Activated CD8-positive, alpha-beta T cell treated with anti-CD3 and anti-CD28 coated beads for 36 hours (primary cell): ENCODE measurements at regions of chr6 and their contacts with region 1.

Region 1: DNA sequence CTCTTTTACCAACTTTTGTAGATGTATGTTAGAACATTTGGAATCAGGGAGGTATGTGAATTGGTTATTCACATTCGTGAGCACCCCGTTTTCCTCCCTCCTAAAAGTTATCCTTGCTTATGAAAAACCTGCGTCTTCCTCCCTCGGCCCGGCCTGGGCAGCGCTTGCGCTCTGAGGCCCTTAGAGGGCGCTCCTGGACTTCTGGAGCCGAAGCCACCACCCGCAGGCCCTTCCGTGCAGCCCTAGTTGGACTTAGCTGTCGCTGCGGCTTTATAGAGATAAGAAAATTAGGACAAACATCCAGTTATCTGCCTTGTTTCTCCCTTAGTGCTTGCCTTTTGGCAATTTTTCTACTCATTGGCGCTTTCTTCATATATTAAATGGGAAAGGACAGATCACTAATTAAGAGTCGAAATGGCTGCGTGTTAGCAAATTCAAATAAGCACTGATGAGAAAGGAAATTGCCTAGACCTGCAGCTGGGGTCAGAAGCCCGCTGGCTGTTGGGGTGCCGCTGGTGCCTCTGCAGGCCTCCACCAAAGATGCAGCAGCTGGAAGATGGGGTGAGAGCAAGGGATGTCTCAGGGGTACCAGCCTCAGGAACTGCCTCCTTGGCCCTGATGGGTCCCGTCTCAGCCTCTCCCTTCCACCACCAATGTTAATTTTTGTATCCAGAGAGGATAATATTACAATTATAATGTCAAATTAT is 5.2 kb downstream of the FNDC1 start:
- DNase-seq: peak; percentile 81
- ATAC-seq: peak; percentile 89
- H3K4me3 Mint-ChIP-seq: no peak overlapping the region
- H3K27ac Mint-ChIP-seq: no peak overlapping the region
- H3K4me1 Mint-ChIP-seq: peaks cover 4% of the 10 kb centered on the region
- H3K27me3 Mint-ChIP-seq: peaks cover 43% of the 10 kb centered on the region
- CTCF ChIP-seq: peak; percentile 93

Region 2: DNA sequence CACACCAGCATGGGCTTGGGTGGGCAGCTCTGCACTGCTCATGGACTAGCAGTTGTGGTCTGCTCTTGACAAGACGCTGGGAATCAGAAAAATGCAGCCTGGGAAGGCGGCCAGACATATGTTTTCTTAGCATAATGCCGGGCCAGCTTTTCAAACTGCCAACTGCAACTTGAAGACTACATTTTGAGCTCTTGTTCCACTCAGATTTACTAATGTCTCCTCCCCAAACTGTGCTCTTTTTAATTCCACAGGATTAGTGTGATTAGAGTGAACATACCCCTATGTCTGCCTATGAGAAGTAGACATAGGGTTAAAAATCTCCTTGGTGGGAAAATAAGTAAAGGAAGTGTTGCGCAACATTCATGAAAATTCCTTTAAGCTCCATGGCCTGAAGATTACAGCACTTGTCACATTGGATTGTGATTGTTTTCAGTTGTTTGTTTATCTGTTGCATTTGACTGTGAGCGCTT is 10.5 kb before region 1 on chr6:
- CTCF ChIA-PET with region 1: interaction called, 12 read pairs
- POLR2A ChIA-PET with region 1: no interaction called
- intact Hi-C with region 1: no loop called
- DNase-seq: no peak
- ATAC-seq: no peak
- H3K4me3 Mint-ChIP-seq: no peak overlapping the region
- H3K27ac Mint-ChIP-seq: no peak overlapping the region
- H3K4me1 Mint-ChIP-seq: peaks cover 4% of the 10 kb centered on the region
- H3K27me3 Mint-ChIP-seq: peaks cover 48% of the 10 kb centered on the region
- CTCF ChIP-seq: no peak

Region 3: GRCh38 chr6:159184559-159184958 is 10.1 kb after region 1 on chr6:
- CTCF ChIA-PET with region 1: interaction called, 56 read pairs
- POLR2A ChIA-PET with region 1: no interaction called
- intact Hi-C with region 1: no loop called
- DNase-seq: no peak
- ATAC-seq: no peak
- H3K4me3 Mint-ChIP-seq: no peak overlapping the region
- H3K27ac Mint-ChIP-seq: no peak overlapping the region
- H3K4me1 Mint-ChIP-seq: peaks cover 6% of the 10 kb centered on the region
- H3K27me3 Mint-ChIP-seq: peaks cover 10% of the 10 kb centered on the region
- CTCF ChIP-seq: no peak

Region 4: DNA sequence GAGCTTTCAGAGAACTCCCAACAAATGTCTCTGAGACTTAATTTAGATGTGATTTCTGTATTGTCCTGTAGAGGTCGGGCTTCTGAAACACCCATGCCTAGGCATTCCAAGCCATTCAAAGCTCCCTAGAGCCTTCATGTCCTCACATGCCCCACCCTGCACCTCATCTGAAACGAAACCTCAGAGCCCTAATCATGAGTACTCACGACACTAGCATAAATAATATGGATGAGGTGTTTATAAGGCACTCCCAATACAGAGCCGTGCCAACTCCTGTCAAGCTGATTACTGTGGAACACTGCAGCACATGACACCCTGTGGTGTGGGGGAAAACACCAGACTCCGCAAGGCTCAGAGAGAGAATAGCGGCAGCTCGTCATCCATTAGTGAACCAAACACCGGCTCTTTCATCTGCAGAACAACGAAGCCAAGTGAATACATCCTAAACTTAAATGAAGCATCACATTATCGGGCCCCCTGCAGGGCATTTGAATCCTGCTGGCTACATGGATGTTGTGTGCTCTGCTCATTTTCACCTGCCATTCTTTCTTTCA is 78.6 kb after region 1 on chr6:
- CTCF ChIA-PET with region 1: interaction called, 13 read pairs
- POLR2A ChIA-PET with region 1: no interaction called
- intact Hi-C with region 1: no loop called
- DNase-seq: peak; percentile 3
- ATAC-seq: peak; percentile 72
- H3K4me3 Mint-ChIP-seq: no peak overlapping the region
- H3K27ac Mint-ChIP-seq: no peak overlapping the region
- H3K4me1 Mint-ChIP-seq: peaks cover 1% of the 10 kb centered on the region
- H3K27me3 Mint-ChIP-seq: peaks cover 9% of the 10 kb centered on the region
- CTCF ChIP-seq: peak; percentile 68

Region 5: DNA sequence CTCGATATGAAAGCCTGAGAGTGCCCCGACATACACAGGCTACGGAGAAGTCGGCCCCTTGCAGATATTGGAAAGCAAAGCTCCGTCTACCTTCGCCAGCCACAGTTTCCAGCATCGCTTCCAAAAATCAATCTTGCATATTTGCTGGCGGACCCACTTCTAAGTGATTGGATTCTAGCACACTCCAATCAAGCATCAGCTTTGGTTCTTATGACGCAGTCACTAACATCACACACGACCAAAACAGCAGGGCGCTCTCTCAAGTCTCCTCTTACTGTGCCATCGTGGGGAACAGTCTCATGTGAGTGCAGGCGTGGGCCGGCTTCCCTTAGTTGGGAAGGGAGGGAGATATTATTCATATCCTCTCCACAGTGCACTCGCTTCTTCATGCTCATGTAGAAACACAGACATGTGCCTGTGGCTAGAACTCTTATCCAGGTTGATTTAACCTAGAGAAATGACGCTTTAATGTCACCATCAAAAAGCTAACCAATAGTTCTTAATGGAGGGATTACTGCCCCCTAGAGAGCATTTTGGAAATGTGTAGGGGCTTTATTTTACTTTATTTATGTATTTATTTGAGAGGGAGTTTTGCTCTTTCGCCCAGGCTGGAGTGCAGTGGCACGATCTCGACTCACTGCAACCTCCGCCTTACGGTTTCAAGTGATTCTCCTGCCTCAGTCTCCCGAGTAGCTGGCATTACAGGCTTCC is 288.9 kb after region 1 on chr6:
- CTCF ChIA-PET with region 1: interaction called, 15 read pairs
- POLR2A ChIA-PET with region 1: no interaction called
- intact Hi-C with region 1: no loop called
- DNase-seq: no peak
- ATAC-seq: no peak
- H3K4me3 Mint-ChIP-seq: no peak overlapping the region
- H3K27ac Mint-ChIP-seq: no peak overlapping the region
- H3K4me1 Mint-ChIP-seq: no peaks in the 10 kb centered on the region
- H3K27me3 Mint-ChIP-seq: peaks cover 7% of the 10 kb centered on the region
- CTCF ChIP-seq: no peak